ENCODE measurements at regions of chr5 and their contacts with region 1.

Region 1: DNA sequence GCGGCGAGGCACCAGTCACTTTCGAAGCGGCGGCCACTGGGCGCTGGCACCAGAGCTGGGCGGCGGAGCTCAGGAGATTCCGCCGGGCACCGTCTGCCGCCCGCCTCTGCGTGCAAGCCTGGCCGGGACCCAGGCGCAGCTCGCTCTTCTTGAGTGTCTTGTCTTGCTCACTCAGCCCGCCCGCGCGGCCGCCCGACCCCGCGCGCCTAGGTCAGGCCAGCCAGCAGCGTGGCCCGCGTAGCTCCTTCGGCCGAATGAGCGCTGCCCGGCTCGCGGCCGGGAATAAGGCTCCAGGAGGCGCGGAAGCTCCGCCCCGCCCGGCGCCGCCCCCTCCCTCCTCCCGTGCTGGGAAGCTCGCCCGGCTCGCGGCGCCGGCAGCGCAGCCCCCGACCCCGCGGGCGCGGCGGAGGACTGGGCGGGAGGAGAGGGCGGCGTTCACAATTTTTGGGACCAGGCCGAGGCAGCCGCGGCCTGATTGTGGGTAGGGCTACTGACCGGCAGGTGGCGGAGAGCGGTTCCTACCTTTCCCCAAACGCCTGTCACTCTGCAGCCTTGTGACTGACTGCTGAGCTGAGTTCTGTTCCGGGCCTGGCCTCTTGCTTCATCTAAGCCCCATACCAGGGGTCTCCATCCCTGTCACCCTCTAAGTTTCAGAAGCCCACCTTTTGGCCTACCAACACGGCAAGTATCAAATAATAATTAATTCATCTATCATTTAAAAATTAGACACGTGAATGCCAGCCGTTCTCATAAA is at the start of gene HBEGF:
- DNase-seq: peak; percentile 78
- ATAC-seq: peak; percentile 74
- H3K4me3 ChIP-seq: peak within 1 kb of the TSS; percentile 34 to 67 (median 58)
- H3K4me3 Mint-ChIP-seq: peak within 1 kb of the TSS; percentile 82
- H3K27ac ChIP-seq: no peak within 1 kb of the TSS
- H3K27ac Mint-ChIP-seq: no peak within 1 kb of the TSS
- H3K4me1 ChIP-seq: peaks cover 46 to 60% of the 10 kb centered on the region in 2 donors
- H3K4me1 Mint-ChIP-seq: peaks cover 50% of the 10 kb centered on the region
- H3K27me3 ChIP-seq: peaks cover 0 to 16% (median 0%) of the 10 kb centered on the region in 4 experiments
- H3K27me3 Mint-ChIP-seq: peaks cover 5% of the 10 kb centered on the region
- CTCF ChIP-seq: peak; percentile 68
- total RNA-seq, gene HBEGF: 0.61 and 0.89 TPM in 2 replicates

Region 2: GRCh38 chr5:139849942-139850341 is 496.6 kb before region 1 on chr5:
- CTCF ChIA-PET with region 1: no interaction called
- POLR2A ChIA-PET with region 1: no interaction called
- intact Hi-C with region 1: no loop called
- DNase-seq: no peak
- ATAC-seq: no peak
- H3K4me3 ChIP-seq: no peak overlapping the region
- H3K4me3 Mint-ChIP-seq: peak overlapping the region; percentile 85
- H3K27ac ChIP-seq: no peak overlapping the region
- H3K27ac Mint-ChIP-seq: peak overlapping the region; percentile 42
- H3K4me1 ChIP-seq: peaks cover 8 to 12% of the 10 kb centered on the region in 2 donors
- H3K4me1 Mint-ChIP-seq: peaks cover 11% of the 10 kb centered on the region
- H3K27me3 ChIP-seq: peaks cover 0 to 22% (median 10%) of the 10 kb centered on the region in 4 experiments
- H3K27me3 Mint-ChIP-seq: peaks cover 4% of the 10 kb centered on the region
- CTCF ChIP-seq: no peak

Region 3: DNA sequence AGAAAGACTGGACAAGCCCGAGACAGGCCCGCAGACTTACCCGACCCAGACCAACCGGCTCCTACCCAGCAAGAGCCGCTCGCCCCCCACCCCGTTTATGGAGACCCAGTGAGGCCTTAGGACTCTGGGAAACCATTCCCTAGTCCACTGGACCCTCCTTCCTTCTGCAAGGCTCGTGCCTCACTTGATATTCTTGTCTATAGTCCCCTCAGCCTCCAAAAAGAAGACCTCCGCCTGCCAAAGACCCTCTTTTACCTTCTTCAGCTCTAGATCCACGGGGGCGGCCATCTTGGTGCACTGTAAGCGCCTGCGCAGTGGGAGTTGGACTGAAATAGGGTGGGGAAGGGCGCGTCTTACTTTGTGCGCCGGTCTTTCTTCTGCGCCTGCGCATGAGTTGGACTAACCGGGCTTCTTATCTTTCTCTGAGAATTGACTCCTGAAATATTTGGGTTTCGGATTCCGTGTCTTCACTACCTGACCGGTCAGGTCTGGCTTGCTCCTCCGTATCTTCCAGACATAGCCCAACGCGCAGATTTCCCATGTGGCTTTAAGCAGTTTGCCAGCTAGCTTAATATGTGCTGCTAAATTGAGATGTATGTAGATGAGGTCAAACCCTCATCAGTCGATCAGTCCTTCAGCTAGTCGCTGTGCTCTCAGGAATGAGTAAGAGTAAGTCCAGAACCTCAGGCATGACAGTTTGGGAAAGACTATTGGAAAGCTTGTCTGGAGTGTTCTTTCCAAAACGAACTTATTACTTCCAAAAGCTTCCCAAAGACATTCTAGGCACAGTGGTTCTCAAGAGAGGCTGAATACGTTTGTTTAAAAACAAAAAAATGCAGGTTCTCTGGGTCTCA is 43.5 kb before region 1 on chr5 and contains the start of gene PFDN1:
- CTCF ChIA-PET with region 1: interaction called, 3 read pairs
- POLR2A ChIA-PET with region 1: interaction called, 3 read pairs
- intact Hi-C with region 1: loop called (anchors 5 kb)
- DNase-seq: peak; percentile 94
- ATAC-seq: peak; percentile 98
- H3K4me3 ChIP-seq: peak within 1 kb of the TSS; percentile 85 to 96 (median 91)
- H3K4me3 Mint-ChIP-seq: peak within 1 kb of the TSS; percentile 97
- H3K27ac ChIP-seq: peak within 1 kb of the TSS; percentile 74 to 82
- H3K27ac Mint-ChIP-seq: peak within 1 kb of the TSS; percentile 95
- H3K4me1 ChIP-seq: peaks cover 12% of the 10 kb centered on the region in 2 donors
- H3K4me1 Mint-ChIP-seq: peaks cover 13% of the 10 kb centered on the region
- H3K27me3 ChIP-seq: no peaks in the 10 kb centered on the region
- H3K27me3 Mint-ChIP-seq: peaks cover 9% of the 10 kb centered on the region
- CTCF ChIP-seq: no peak
- total RNA-seq, gene PFDN1: 29.8 and 30.3 TPM in 2 replicates

Region 4: DNA sequence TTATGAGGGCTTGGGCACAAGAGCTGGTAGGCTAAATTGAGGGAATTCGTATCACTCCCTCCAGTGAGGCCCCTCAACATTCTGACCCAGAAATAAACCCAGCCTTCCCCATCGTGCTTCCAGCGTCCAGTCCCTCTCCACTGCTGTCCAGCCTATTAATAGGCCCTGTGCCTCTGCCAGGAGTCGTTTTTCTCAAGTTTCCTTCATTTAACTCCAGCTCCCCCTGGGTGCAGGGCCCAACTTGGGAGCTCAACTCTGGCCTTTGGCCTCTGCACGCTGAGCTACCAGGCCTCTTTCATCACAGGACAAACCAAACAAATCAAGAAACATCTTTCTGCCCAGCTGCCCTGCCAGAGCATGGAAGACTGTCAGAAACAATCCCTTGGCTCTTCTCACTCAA is 10.1 kb before region 1 on chr5:
- CTCF ChIA-PET with region 1: interaction called, 18 read pairs
- POLR2A ChIA-PET with region 1: interaction called, 5 read pairs
- intact Hi-C with region 1: no loop called
- DNase-seq: no peak
- ATAC-seq: no peak
- H3K4me3 ChIP-seq: no peak overlapping the region
- H3K4me3 Mint-ChIP-seq: no peak overlapping the region
- H3K27ac ChIP-seq: no peak overlapping the region
- H3K27ac Mint-ChIP-seq: no peak overlapping the region
- H3K4me1 ChIP-seq: peaks cover 6 to 9% of the 10 kb centered on the region in 2 donors
- H3K4me1 Mint-ChIP-seq: peaks cover 8% of the 10 kb centered on the region
- H3K27me3 ChIP-seq: peaks cover 0 to 3% (median 0%) of the 10 kb centered on the region in 4 experiments
- H3K27me3 Mint-ChIP-seq: no peaks in the 10 kb centered on the region
- CTCF ChIP-seq: no peak

Region 5: GRCh38 chr5:140357726-140358093 is 11.2 kb after region 1 on chr5:
- CTCF ChIA-PET with region 1: interaction called, 89 read pairs
- POLR2A ChIA-PET with region 1: no interaction called
- intact Hi-C with region 1: loop called (anchors 1 kb)
- DNase-seq: peak; percentile 83
- ATAC-seq: peak; percentile 99
- H3K4me3 ChIP-seq: peak overlapping the region in 1 of 5 experiments; percentile 18
- H3K4me3 Mint-ChIP-seq: peak overlapping the region; percentile 46
- H3K27ac ChIP-seq: no peak overlapping the region
- H3K27ac Mint-ChIP-seq: no peak overlapping the region
- H3K4me1 ChIP-seq: peaks cover 6 to 12% of the 10 kb centered on the region in 2 donors
- H3K4me1 Mint-ChIP-seq: peaks cover 6% of the 10 kb centered on the region
- H3K27me3 ChIP-seq: no peaks in the 10 kb centered on the region
- H3K27me3 Mint-ChIP-seq: peaks cover 8% of the 10 kb centered on the region
- CTCF ChIP-seq: peak; percentile 86

Measured in B cell (primary cell).